A673 (cell line): ENCODE measurements at regions of chr3 and their contacts with region 1.

Region 1: GRCh38 chr3:125271127-125271526 is 58.6 kb upstream of the SLC12A8 start:
- DNase-seq: no peak
- H3K4me3 ChIP-seq: no peak overlapping the region
- H3K27ac ChIP-seq: no peak overlapping the region
- H3K4me1 ChIP-seq: no peaks in the 10 kb centered on the region
- H3K27me3 ChIP-seq: no peaks in the 10 kb centered on the region
- CTCF ChIP-seq: no peak

Region 2: DNA sequence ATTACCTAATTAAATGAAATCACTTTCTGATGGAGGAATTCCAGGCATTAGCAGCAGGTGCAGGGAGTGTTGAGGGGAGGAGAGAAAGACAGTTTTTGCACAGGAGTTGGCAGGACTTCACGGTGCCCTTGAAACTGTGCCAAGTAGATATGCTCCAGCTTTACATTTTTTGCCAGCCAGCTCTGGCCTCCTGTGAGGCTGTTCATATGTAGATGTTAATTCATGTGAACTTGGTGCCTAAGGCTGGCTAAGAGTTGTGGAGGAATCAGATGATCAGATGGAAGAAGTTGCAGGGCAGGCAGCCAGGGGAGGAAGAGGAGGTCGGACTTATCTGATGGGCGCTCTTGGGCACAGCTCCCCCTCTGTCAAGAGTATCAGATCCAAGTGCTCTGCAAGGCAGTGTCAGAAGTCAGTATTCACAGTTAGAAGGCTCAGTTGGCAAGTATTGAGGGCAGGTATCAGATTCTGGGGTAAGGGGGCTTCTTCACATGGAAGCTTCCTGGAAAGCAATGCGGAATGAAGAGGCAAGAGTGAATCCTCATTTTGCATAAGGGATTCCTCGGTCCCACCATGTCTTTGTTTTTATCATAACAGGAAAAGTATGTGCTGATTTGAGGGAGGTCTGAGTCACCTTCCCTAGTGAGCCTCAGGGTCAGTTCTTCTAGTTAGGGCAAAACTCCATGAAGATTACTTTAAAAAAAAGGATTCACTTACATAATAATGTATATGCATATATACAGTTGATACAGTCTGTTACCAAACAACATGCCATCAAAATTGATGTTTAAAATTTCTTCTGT is 713.5 kb before region 1 on chr3:
- CTCF ChIA-PET with region 1: no interaction called
- POLR2A ChIA-PET with region 1: no interaction called
- intact Hi-C with region 1: no loop called
- DNase-seq: peak; percentile 47
- H3K4me3 ChIP-seq: no peak overlapping the region
- H3K27ac ChIP-seq: no peak overlapping the region
- H3K4me1 ChIP-seq: peaks cover 31% of the 10 kb centered on the region
- H3K27me3 ChIP-seq: no peaks in the 10 kb centered on the region
- CTCF ChIP-seq: no peak

Region 3: GRCh38 chr3:125103406-125103805 is 167.7 kb before region 1 on chr3:
- CTCF ChIA-PET with region 1: interaction called, 11 read pairs
- POLR2A ChIA-PET with region 1: no interaction called
- intact Hi-C with region 1: no loop called
- DNase-seq: no peak
- H3K4me3 ChIP-seq: no peak overlapping the region
- H3K27ac ChIP-seq: no peak overlapping the region
- H3K4me1 ChIP-seq: peaks cover 10% of the 10 kb centered on the region
- H3K27me3 ChIP-seq: no peaks in the 10 kb centered on the region
- CTCF ChIP-seq: no peak